Transverse colon (tissue), 4 donors: ENCODE measurements at regions of chr9 and their contacts with region 1.

Region 1: DNA sequence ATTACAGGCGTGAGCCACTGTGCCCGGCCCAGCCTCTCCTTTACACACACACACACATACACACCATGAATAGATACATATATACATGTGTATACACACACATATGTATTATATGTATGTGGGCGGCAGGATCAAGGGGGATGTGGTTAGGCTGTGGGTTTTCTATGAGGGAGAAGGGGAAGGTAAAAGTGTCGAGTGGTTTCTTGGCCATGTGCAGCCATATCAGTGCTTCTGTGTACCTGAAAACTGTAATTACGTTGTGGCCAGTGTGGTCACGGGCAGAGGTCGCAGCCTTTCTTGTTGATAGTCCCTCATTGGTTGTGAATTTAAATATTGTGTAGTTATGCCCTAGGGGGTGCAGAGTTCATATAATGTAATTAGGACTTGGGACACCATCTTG is 16.5 kb downstream of the CDK20 start:
- DNase-seq: no peak
- H3K4me3 ChIP-seq: no peak overlapping the region
- H3K27ac ChIP-seq: no peak overlapping the region
- H3K4me1 ChIP-seq: peaks cover 0 to 13% (median 3%) of the 10 kb centered on the region in 4 donors
- H3K27me3 ChIP-seq: no peaks in the 10 kb centered on the region
- CTCF ChIP-seq: no peak
- EP300 ChIP-seq: no peak
- POLR2A ChIP-seq: no peak

Region 2: DNA sequence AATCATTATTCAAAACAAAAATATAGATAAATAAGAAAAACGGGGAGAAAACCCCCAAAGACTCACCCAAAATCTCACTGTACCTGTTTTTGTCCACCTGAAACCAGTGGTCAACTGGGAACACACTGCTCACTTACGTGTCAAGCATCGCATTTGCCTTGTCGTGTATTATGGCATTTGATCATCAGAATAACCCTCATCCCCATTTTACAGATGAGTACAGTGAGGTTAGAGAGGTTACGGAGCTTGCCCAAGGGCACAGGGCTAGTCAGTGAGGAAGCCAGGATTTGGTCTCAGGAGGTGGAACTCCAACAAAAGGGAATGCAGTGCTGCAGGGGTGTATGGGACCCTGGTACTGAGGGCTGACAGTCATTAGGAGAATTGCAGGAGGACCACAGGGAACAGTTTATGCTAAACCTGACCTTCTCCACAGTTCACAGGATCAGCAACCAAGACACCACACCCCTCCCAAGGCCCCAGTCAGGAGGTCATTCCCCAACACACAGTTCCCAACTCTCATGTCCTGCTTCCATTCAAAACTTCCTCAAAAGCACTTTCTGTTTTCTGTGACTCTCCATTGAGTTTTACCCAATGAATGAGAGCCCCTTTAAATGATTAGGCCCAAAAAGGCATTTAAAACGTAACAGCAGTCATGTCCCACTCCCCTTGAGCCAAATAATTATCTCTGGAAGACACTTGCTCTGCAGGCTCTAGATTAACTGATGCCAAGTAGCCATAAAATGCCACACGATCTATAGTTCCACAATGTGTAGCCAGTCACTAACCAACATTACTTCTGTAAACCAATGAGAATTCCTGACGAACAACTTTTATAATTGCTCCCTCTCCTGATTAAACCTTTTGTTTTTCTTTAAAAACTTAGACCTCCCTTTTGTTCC is 181.1 kb before region 1 on chr9:
- in situ Hi-C with region 1: no loop called
- intact Hi-C with region 1: no loop called
- DNase-seq: no peak
- H3K4me3 ChIP-seq: no peak overlapping the region
- H3K27ac ChIP-seq: no peak overlapping the region
- H3K4me1 ChIP-seq: no peaks in the 10 kb centered on the region
- H3K27me3 ChIP-seq: peaks cover under 1% of the 10 kb centered on the region
- CTCF ChIP-seq: no peak
- EP300 ChIP-seq: no peak
- POLR2A ChIP-seq: no peak

Region 3: DNA sequence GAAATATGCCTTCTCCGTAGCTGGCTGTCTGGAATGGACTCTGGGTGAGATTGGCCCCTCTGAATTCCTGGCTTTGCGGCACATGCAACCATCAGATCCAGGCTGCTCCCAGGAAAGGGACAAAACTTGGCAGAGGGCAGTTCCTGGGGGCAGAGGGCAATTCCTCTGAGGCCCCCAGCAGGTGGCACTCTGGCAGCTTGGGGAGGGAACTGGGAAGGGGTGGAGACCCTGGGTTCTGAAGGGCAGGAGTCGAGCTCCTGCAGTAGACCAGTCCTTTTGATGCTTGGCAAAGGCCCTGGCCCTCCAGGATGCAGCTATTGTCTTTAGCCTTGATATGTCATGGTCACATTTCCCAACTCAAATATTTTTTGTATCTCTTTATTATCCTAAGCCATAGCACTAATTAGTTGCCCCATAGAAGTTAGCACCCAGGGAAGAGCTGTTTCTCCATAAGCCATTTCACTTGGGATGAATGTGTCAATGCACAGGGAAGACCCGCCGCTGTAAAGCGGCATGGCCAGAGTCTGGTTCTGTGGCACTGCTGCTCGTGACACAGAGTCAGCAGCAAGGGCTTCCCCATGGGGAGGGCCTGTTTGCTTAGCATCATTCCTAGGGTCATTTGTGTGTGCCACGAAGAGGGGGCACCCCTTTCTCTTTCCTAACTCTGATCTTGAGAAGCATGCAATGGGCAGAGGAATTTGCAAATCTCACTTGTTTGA is 67.7 kb after region 1 on chr9:
- in situ Hi-C with region 1: no loop called
- intact Hi-C with region 1: loop called (anchors 2 kb)
- DNase-seq: no peak
- H3K4me3 ChIP-seq: no peak overlapping the region
- H3K27ac ChIP-seq: no peak overlapping the region
- H3K4me1 ChIP-seq: no peaks in the 10 kb centered on the region
- H3K27me3 ChIP-seq: no peaks in the 10 kb centered on the region
- CTCF ChIP-seq: no peak
- EP300 ChIP-seq: no peak
- POLR2A ChIP-seq: no peak